ENCODE measurements at regions of chr7 and their contacts with region 1.

Region 1: GRCh38 chr7:127447326-127447945 is 54.9 kb upstream of the ZNF800 start:
- DNase-seq: peak in 8 of 9 donors; percentile 47 to 66 (median 56)
- ATAC-seq: peak; percentile 100
- H3K4me3 ChIP-seq: no peak overlapping the region
- H3K4me3 Mint-ChIP-seq: peak overlapping the region in 1 of 10 donors; percentile 43
- H3K27ac ChIP-seq: no peak overlapping the region
- H3K27ac Mint-ChIP-seq: peak overlapping the region in 1 of 9 donors; percentile 40
- H3K4me1 ChIP-seq: peaks cover 0 to 11% of the 10 kb centered on the region in 2 donors
- H3K4me1 Mint-ChIP-seq: peaks cover 5 to 33% (median 28%) of the 10 kb centered on the region in 7 donors
- H3K27me3 ChIP-seq: no peaks in the 10 kb centered on the region
- H3K27me3 Mint-ChIP-seq: peaks cover 4 to 51% (median 14%) of the 10 kb centered on the region in 5 donors

Region 2: DNA sequence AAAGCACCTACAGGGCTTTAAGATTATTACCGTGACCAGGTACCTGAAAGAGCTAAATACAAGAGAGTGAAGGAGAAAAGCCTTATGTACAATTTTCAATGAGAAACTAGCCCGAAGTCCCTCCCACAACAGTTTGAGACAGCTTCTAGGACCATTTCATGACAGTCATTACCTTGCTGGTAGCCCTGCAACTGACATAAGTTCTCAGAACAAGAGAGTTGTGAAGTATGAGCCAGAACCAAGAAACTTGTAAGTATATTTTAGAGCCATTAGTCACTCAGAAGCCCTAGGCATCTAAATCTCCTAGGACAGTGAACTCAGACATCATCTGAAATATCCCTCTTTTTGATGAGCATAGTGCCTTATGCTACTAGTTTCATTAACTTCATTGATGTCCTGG is 986.8 kb before region 1 on chr7:
- CTCF ChIA-PET with region 1: no interaction called
- POLR2A ChIA-PET with region 1: no interaction called
- intact Hi-C with region 1: no loop called
- DNase-seq: no peak
- ATAC-seq: no peak
- H3K4me3 ChIP-seq: no peak overlapping the region
- H3K4me3 Mint-ChIP-seq: no peak overlapping the region
- H3K27ac ChIP-seq: no peak overlapping the region
- H3K27ac Mint-ChIP-seq: no peak overlapping the region
- H3K4me1 ChIP-seq: no peaks in the 10 kb centered on the region
- H3K4me1 Mint-ChIP-seq: no peaks in the 10 kb centered on the region
- H3K27me3 ChIP-seq: no peaks in the 10 kb centered on the region
- H3K27me3 Mint-ChIP-seq: no peaks in the 10 kb centered on the region

Region 3: GRCh38 chr7:126803060-126803665 is 644.3 kb before region 1 on chr7:
- CTCF ChIA-PET with region 1: no interaction called
- POLR2A ChIA-PET with region 1: no interaction called
- intact Hi-C with region 1: loop called in 1 of 2 experiments (anchors 10 kb)
- DNase-seq: peak in 5 of 9 donors; percentile 8 to 47 (median 21)
- ATAC-seq: no peak
- H3K4me3 ChIP-seq: no peak overlapping the region
- H3K4me3 Mint-ChIP-seq: no peak overlapping the region
- H3K27ac ChIP-seq: no peak overlapping the region
- H3K27ac Mint-ChIP-seq: no peak overlapping the region
- H3K4me1 ChIP-seq: no peaks in the 10 kb centered on the region
- H3K4me1 Mint-ChIP-seq: no peaks in the 10 kb centered on the region
- H3K27me3 ChIP-seq: no peaks in the 10 kb centered on the region
- H3K27me3 Mint-ChIP-seq: peaks cover 0 to 15% (median 7%) of the 10 kb centered on the region in 5 donors

Region 4: DNA sequence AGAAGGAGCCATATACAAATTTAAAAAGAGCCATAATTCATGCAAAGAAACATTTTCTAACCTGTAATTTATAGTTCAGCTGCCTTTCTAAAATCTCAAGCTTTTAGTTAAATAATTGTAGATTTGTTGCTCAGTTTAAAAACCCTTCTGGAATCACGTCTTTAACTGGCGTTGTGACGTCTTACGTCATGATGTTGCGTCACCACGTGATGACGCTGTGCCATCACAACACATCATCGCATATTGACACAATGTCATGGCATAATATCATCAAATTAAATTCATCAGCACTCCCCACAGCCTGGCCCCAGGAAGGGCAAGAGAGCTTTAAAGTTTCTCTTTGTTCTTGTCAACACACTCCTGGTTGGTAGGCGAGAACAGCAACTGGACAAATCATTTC is 389.5 kb before region 1 on chr7:
- CTCF ChIA-PET with region 1: no interaction called
- POLR2A ChIA-PET with region 1: no interaction called
- intact Hi-C with region 1: no loop called
- DNase-seq: no peak
- ATAC-seq: no peak
- H3K4me3 ChIP-seq: no peak overlapping the region
- H3K4me3 Mint-ChIP-seq: no peak overlapping the region
- H3K27ac ChIP-seq: no peak overlapping the region
- H3K27ac Mint-ChIP-seq: no peak overlapping the region
- H3K4me1 ChIP-seq: no peaks in the 10 kb centered on the region
- H3K4me1 Mint-ChIP-seq: no peaks in the 10 kb centered on the region
- H3K27me3 ChIP-seq: no peaks in the 10 kb centered on the region
- H3K27me3 Mint-ChIP-seq: peaks cover 0 to 15% (median 9%) of the 10 kb centered on the region in 5 donors

Region 5: DNA sequence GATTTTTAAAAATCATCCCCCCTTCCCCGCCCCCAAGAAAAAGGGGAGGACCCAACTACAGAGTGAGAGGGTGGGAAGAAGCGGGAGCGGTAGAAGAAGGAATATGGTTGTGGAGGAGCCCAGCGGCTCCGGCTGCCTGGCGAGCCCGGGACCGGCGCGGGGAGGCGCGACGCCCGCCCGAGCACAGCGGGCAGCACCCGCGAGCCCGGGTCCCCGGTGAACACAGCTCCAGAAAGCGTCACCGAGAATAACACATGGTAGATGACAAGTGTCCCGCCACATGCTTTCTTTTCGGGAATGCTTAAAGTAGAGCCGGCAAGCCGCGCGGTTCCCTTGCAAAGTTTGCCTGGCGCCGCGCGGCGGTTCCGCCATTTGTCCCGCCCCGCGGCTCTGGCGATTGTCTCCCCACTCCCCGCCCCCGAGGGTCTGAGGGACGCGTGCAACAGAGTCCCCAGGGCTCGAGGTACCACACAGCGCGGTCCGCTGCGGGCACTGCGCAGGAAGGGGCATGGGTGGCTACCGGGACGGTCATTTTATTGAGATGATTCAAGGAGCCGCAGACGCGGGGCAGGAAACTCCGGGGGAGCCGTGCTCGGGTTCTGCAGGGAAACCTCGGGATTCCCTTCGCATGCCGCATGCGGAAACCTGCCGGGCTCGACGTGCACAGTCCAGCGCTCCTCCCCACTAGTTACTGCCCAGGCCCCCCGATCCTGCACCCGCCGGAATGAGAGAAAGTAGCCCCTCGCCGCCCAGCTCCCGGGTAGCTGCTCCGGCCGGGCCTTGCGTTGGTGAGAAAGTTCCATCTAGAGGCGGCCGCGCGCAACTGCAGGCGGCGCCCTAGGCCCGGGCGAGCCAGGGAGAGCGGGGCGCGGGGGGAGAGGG is 193.9 kb before region 1 on chr7:
- CTCF ChIA-PET with region 1: interaction called, 3 read pairs
- POLR2A ChIA-PET with region 1: no interaction called
- intact Hi-C with region 1: loop called (anchors 1 to 2 kb)
- DNase-seq: peak; percentile 13 to 64 (median 41)
- ATAC-seq: peak; percentile 84
- H3K4me3 ChIP-seq: peak overlapping the region; percentile 76
- H3K4me3 Mint-ChIP-seq: peak overlapping the region; percentile 76 to 93 (median 88)
- H3K27ac ChIP-seq: no peak overlapping the region
- H3K27ac Mint-ChIP-seq: no peak overlapping the region
- H3K4me1 ChIP-seq: peaks cover 12 to 16% of the 10 kb centered on the region in 2 donors
- H3K4me1 Mint-ChIP-seq: peaks cover 12 to 32% (median 25%) of the 10 kb centered on the region in 7 donors
- H3K27me3 ChIP-seq: peaks cover 3 to 27% of the 10 kb centered on the region in 2 donors
- H3K27me3 Mint-ChIP-seq: peaks cover 65 to 83% (median 73%) of the 10 kb centered on the region in 5 donors

Region 6: GRCh38 chr7:127375631-127376030 is 71.8 kb before region 1 on chr7:
- CTCF ChIA-PET with region 1: interaction called, 5 read pairs
- POLR2A ChIA-PET with region 1: no interaction called
- intact Hi-C with region 1: loop called in 1 of 2 experiments (anchors 1 kb)
- DNase-seq: no peak
- ATAC-seq: no peak
- H3K4me3 ChIP-seq: no peak overlapping the region
- H3K4me3 Mint-ChIP-seq: no peak overlapping the region
- H3K27ac ChIP-seq: no peak overlapping the region
- H3K27ac Mint-ChIP-seq: peak overlapping the region in 1 of 9 donors; percentile 37
- H3K4me1 ChIP-seq: peaks cover 17 to 18% of the 10 kb centered on the region in 2 donors
- H3K4me1 Mint-ChIP-seq: peaks cover 19 to 80% (median 60%) of the 10 kb centered on the region in 7 donors
- H3K27me3 ChIP-seq: no peaks in the 10 kb centered on the region
- H3K27me3 Mint-ChIP-seq: no peaks in the 10 kb centered on the region

Region 7: GRCh38 chr7:127383123-127383835 is 64.2 kb before region 1 on chr7:
- CTCF ChIA-PET with region 1: interaction called, 5 read pairs
- POLR2A ChIA-PET with region 1: no interaction called
- intact Hi-C with region 1: loop called in 1 of 2 experiments (anchors 2 kb)
- DNase-seq: no peak
- ATAC-seq: peak; percentile 37
- H3K4me3 ChIP-seq: no peak overlapping the region
- H3K4me3 Mint-ChIP-seq: peak overlapping the region in 7 of 10 donors; percentile 3 to 69 (median 40)
- H3K27ac ChIP-seq: no peak overlapping the region
- H3K27ac Mint-ChIP-seq: peak overlapping the region in 6 of 9 donors; percentile 1 to 80 (median 26)
- H3K4me1 ChIP-seq: peaks cover 30 to 36% of the 10 kb centered on the region in 2 donors
- H3K4me1 Mint-ChIP-seq: peaks cover 49 to 95% (median 83%) of the 10 kb centered on the region in 7 donors
- H3K27me3 ChIP-seq: no peaks in the 10 kb centered on the region
- H3K27me3 Mint-ChIP-seq: no peaks in the 10 kb centered on the region

Region 8: DNA sequence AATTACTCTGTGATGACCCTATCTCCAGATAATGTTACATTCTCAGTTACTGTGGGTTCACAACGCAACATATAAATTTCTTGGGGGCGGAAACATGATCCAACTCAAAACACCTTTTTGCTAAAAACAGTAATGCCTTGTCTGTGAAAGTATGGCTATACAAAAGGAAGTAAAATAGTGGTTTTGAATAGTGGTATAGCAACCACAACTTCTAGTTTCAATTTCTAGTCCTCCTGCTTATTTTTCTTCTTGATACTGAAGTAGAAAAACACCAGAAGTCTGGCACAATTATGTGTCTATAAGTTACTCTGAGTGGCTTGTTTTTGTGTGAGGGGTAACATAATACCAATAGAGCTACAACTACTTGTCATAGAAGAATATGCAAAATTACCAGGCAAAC is 33.5 kb before region 1 on chr7:
- CTCF ChIA-PET with region 1: interaction called, 4 read pairs
- POLR2A ChIA-PET with region 1: interaction called, 9 read pairs
- intact Hi-C with region 1: loop called (anchors 1 kb)
- DNase-seq: peak in 7 of 9 donors; percentile 37 to 76 (median 67)
- ATAC-seq: peak; percentile 88
- H3K4me3 ChIP-seq: peak overlapping the region; percentile 5
- H3K4me3 Mint-ChIP-seq: peak overlapping the region; percentile 57 to 87 (median 74)
- H3K27ac ChIP-seq: peak overlapping the region; percentile 61
- H3K27ac Mint-ChIP-seq: peak overlapping the region; percentile 88 to 99 (median 95)
- H3K4me1 ChIP-seq: peaks cover 20 to 45% of the 10 kb centered on the region in 2 donors
- H3K4me1 Mint-ChIP-seq: peaks cover 45 to 74% (median 68%) of the 10 kb centered on the region in 7 donors
- H3K27me3 ChIP-seq: no peaks in the 10 kb centered on the region
- H3K27me3 Mint-ChIP-seq: peaks cover 0 to 14% (median 0%) of the 10 kb centered on the region in 5 donors

Region 9: DNA sequence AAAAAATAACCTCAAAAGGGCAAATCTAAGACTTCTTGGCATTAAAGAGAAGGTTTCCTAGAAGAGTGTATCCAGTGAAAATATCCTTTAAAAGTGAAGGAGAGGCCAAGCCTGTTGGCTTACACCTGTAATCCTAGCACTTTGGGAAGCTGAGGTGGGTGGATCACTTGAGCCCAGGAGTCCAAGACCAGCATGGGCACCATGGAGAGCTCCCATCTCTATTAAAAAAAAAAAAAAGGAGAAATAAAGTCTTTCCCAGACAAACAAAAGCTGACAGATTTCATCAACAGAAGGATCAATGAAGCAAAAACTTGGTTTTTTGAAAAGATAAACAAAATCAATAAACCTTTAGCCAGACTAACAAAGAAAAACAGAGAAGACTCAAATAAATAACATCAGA is 12.6 kb after region 1 on chr7:
- CTCF ChIA-PET with region 1: no interaction called
- POLR2A ChIA-PET with region 1: no interaction called
- intact Hi-C with region 1: no loop called
- DNase-seq: no peak
- ATAC-seq: no peak
- H3K4me3 ChIP-seq: no peak overlapping the region
- H3K4me3 Mint-ChIP-seq: no peak overlapping the region
- H3K27ac ChIP-seq: no peak overlapping the region
- H3K27ac Mint-ChIP-seq: no peak overlapping the region
- H3K4me1 ChIP-seq: no peaks in the 10 kb centered on the region
- H3K4me1 Mint-ChIP-seq: no peaks in the 10 kb centered on the region
- H3K27me3 ChIP-seq: no peaks in the 10 kb centered on the region
- H3K27me3 Mint-ChIP-seq: peaks cover 0 to 9% (median 0%) of the 10 kb centered on the region in 5 donors

Region 10: DNA sequence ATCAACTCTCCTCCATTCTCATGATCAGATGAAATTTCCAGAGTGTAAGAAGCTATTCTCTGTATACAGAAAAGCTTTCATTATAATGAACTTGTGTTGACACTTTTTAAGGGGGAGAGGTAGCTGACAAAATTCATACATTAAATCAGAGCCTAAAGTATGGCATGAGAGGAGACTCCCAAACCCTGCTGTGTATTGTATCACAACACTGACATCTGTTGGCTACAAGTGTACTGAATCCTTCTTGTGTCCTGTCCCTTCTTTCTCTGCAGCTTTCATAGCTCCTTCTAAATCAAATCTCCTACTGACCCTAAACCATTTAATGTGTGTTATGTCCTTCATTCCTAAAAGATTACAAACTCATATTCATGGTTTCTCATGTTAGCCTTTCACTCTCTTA is 67.1 kb after region 1 on chr7:
- CTCF ChIA-PET with region 1: no interaction called
- POLR2A ChIA-PET with region 1: no interaction called
- intact Hi-C with region 1: loop called in 1 of 2 experiments (anchors 1 kb)
- DNase-seq: peak in 7 of 9 donors; percentile 14 to 59 (median 41)
- ATAC-seq: peak; percentile 75
- H3K4me3 ChIP-seq: no peak overlapping the region
- H3K4me3 Mint-ChIP-seq: no peak overlapping the region
- H3K27ac ChIP-seq: no peak overlapping the region
- H3K27ac Mint-ChIP-seq: no peak overlapping the region
- H3K4me1 ChIP-seq: no peaks in the 10 kb centered on the region
- H3K4me1 Mint-ChIP-seq: no peaks in the 10 kb centered on the region
- H3K27me3 ChIP-seq: peaks cover 0 to 3% of the 10 kb centered on the region in 2 donors
- H3K27me3 Mint-ChIP-seq: peaks cover 13 to 43% (median 29%) of the 10 kb centered on the region in 5 donors

Region 11: GRCh38 chr7:127588019-127588696 is 140.7 kb after region 1 on chr7 and contains the start of gene ARF5:
- CTCF ChIA-PET with region 1: no interaction called
- POLR2A ChIA-PET with region 1: no interaction called
- intact Hi-C with region 1: no loop called
- DNase-seq: peak; percentile 74 to 93 (median 85)
- ATAC-seq: peak; percentile 91
- H3K4me3 ChIP-seq: peak within 1 kb of the TSS; percentile 77
- H3K4me3 Mint-ChIP-seq: peak within 1 kb of the TSS; percentile 86 to 99 (median 96)
- H3K27ac ChIP-seq: peak within 1 kb of the TSS; percentile 93
- H3K27ac Mint-ChIP-seq: peak within 1 kb of the TSS; percentile 82 to 97 (median 95)
- H3K4me1 ChIP-seq: peaks cover 33 to 37% of the 10 kb centered on the region in 2 donors
- H3K4me1 Mint-ChIP-seq: peaks cover 40 to 66% (median 57%) of the 10 kb centered on the region in 7 donors
- H3K27me3 ChIP-seq: no peaks in the 10 kb centered on the region
- H3K27me3 Mint-ChIP-seq: no peaks in the 10 kb centered on the region
- total RNA-seq, gene ARF5: 74.6 to 113 (median 78.8) TPM